CD4-positive, alpha-beta T cell (primary cell): ENCODE measurements at regions of chr4 and their contacts with region 1.

Region 1: DNA sequence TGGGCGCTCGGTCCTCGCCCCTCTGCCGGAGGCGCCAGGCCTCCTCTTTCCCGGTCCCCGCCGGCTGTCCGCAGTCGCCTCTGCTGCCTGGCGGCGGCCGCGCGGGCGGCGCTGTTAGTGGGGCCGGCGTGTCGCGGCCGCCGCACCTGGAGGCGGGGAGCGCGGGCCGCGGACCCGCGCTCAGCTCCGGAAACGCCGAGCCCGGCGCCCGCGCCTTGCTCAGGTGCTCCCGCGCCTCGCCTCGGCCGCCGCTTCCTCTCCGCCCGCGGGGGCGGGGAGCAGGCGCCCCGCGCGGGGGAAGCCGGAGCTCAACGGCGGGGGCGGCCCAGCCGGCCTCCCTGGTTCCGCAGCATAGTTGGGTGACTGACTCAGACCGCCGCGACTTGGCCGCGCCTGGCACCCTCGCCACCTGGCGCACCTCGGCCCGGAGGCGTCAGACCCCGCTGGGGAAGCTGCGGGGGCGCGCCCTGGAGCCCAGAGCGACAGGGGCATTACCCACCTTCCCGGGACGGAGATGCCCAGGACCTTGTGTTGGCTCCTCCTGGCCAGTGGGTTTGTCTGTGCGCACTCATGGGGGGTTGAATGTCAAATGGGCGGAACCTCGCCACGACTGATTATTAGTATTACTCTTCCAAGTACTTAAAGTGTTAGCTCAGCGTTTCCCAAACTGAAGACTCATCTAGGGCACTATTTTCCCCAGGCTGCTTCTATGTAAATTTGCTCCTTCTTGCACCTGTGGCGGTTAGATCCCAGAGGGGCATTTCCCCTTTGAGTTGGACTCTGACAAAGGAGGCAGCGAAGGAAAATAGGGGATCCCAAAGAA is at the start of gene ARAP2:
- DNase-seq: peak; percentile 43 to 92 (median 67)
- ATAC-seq: peak; percentile 70
- H3K4me3 ChIP-seq: peak within 1 kb of the TSS; percentile 90
- H3K4me3 Mint-ChIP-seq: peak within 1 kb of the TSS; percentile 99
- H3K27ac ChIP-seq: peak within 1 kb of the TSS; percentile 76 to 93
- H3K27ac Mint-ChIP-seq: peak within 1 kb of the TSS; percentile 95
- H3K4me1 ChIP-seq: peaks cover 18% of the 10 kb centered on the region
- H3K4me1 Mint-ChIP-seq: peaks cover 50% of the 10 kb centered on the region
- H3K27me3 ChIP-seq: no peaks in the 10 kb centered on the region
- H3K27me3 Mint-ChIP-seq: no peaks in the 10 kb centered on the region
- CTCF ChIP-seq: no peak
- total RNA-seq, gene ARAP2: 54.3 to 63.4 TPM

Region 2: GRCh38 chr4:36043901-36044300 is 200.6 kb before region 1 on chr4:
- CTCF ChIA-PET with region 1: no interaction called
- POLR2A ChIA-PET with region 1: no interaction called
- intact Hi-C with region 1: no loop called
- DNase-seq: no peak
- ATAC-seq: no peak
- H3K4me3 ChIP-seq: no peak overlapping the region
- H3K4me3 Mint-ChIP-seq: no peak overlapping the region
- H3K27ac ChIP-seq: no peak overlapping the region
- H3K27ac Mint-ChIP-seq: no peak overlapping the region
- H3K4me1 ChIP-seq: no peaks in the 10 kb centered on the region
- H3K4me1 Mint-ChIP-seq: no peaks in the 10 kb centered on the region
- H3K27me3 ChIP-seq: no peaks in the 10 kb centered on the region
- H3K27me3 Mint-ChIP-seq: no peaks in the 10 kb centered on the region
- CTCF ChIP-seq: no peak

Region 3: GRCh38 chr4:36208893-36209473 is 35.5 kb before region 1 on chr4:
- CTCF ChIA-PET with region 1: interaction called, 3 read pairs
- POLR2A ChIA-PET with region 1: interaction called, 7 read pairs
- intact Hi-C with region 1: loop called (anchors 5 kb)
- DNase-seq: peak in 8 of 14 experiments; percentile 2 to 75 (median 37)
- ATAC-seq: peak; percentile 81
- H3K4me3 ChIP-seq: no peak overlapping the region
- H3K4me3 Mint-ChIP-seq: peak overlapping the region; percentile 54
- H3K27ac ChIP-seq: no peak overlapping the region
- H3K27ac Mint-ChIP-seq: peak overlapping the region; percentile 78
- H3K4me1 ChIP-seq: peaks cover 8% of the 10 kb centered on the region
- H3K4me1 Mint-ChIP-seq: peaks cover 67% of the 10 kb centered on the region
- H3K27me3 ChIP-seq: no peaks in the 10 kb centered on the region
- H3K27me3 Mint-ChIP-seq: no peaks in the 10 kb centered on the region
- CTCF ChIP-seq: no peak

Region 4: GRCh38 chr4:36255577-36255976 is 11.1 kb after region 1 on chr4:
- CTCF ChIA-PET with region 1: interaction called, 13 read pairs
- POLR2A ChIA-PET with region 1: interaction called, 149 read pairs
- intact Hi-C with region 1: loop called in 1 of 2 experiments (anchors 1 kb)
- DNase-seq: peak; percentile 26 to 94 (median 48)
- ATAC-seq: peak; percentile 97
- H3K4me3 ChIP-seq: no peak overlapping the region
- H3K4me3 Mint-ChIP-seq: peak overlapping the region; percentile 56
- H3K27ac ChIP-seq: peak overlapping the region in 1 of 2 donors; percentile 46
- H3K27ac Mint-ChIP-seq: peak overlapping the region; percentile 50
- H3K4me1 ChIP-seq: peaks cover 15% of the 10 kb centered on the region
- H3K4me1 Mint-ChIP-seq: peaks cover 36% of the 10 kb centered on the region
- H3K27me3 ChIP-seq: no peaks in the 10 kb centered on the region
- H3K27me3 Mint-ChIP-seq: no peaks in the 10 kb centered on the region
- CTCF ChIP-seq: no peak

Region 5: DNA sequence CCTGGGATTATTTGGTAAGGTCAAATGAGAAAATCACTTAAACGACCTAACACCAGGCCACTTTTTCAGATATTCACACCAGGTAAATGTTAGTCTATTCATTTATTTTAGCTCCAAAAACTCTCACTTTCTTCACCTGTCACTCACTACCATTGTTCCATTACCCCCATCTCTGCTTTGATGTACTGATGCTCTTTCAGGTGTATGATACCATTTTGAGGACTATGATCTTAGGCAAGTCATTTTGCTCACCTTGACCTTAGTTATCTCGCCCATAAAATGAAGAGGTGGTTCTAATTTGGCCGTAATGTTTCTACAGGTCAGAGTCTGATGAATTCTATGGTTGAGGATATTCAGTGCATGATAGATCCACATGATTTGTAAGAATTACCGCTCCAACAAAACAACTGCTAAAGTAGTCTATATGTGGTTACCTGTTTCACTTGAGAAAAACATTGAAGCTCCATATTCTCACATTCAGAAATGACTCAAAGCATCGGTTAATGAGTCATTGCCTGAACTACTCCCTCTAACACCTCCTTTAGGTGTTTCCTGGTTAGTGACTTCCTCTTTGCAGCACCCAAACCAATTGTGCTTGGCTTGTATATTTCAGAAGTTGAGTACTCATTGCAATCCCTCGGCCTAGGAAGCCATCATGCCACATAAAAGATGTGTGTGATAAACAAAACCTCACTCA is 41.5 kb after region 1 on chr4:
- CTCF ChIA-PET with region 1: interaction called, 16 read pairs
- POLR2A ChIA-PET with region 1: interaction called, 36 read pairs
- intact Hi-C with region 1: loop called (anchors 2 to 5 kb)
- DNase-seq: peak in 13 of 14 experiments; percentile 9 to 92 (median 41)
- ATAC-seq: peak; percentile 93
- H3K4me3 ChIP-seq: peak overlapping the region; percentile 15
- H3K4me3 Mint-ChIP-seq: peak overlapping the region; percentile 49
- H3K27ac ChIP-seq: peak overlapping the region; percentile 13 to 61
- H3K27ac Mint-ChIP-seq: peak overlapping the region; percentile 83
- H3K4me1 ChIP-seq: no peaks in the 10 kb centered on the region
- H3K4me1 Mint-ChIP-seq: peaks cover 20% of the 10 kb centered on the region
- H3K27me3 ChIP-seq: no peaks in the 10 kb centered on the region
- H3K27me3 Mint-ChIP-seq: no peaks in the 10 kb centered on the region
- CTCF ChIP-seq: no peak

Region 6: DNA sequence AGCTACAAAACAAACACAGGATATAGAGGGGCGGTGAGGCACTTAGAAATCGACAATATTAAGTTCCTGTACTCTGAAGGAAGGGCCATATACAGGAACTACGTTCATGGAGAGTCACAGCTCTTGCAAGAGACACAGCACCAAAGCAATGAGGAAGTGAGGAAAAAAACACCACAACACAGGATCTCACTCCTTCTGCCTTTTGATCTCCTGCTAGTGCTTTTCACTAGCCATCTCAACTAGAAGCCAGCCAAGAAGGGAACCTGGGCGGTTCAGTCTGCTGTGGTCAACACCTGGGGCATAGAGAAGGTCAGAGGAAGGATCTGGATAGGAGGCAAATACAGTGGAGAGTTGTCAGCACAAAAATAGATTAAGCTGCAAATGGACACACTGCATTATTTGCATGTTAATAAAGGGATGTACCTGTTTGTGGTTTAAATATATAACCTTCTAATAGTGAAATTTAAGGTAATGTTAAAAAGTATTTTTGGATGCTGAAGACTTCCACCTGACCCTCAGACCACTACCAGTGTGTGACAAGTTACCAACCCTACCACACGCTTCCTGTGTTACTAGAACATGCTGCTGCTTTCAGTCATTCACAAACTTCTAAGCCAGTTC is 141.6 kb after region 1 on chr4:
- CTCF ChIA-PET with region 1: no interaction called
- POLR2A ChIA-PET with region 1: interaction called, 22 read pairs
- intact Hi-C with region 1: loop called in 1 of 2 experiments (anchors 5 kb)
- DNase-seq: peak in 13 of 14 experiments; percentile 0 to 89 (median 30)
- ATAC-seq: peak; percentile 98
- H3K4me3 ChIP-seq: no peak overlapping the region
- H3K4me3 Mint-ChIP-seq: peak overlapping the region; percentile 36
- H3K27ac ChIP-seq: peak overlapping the region; percentile 39 to 44
- H3K27ac Mint-ChIP-seq: peak overlapping the region; percentile 79
- H3K4me1 ChIP-seq: peaks cover 9% of the 10 kb centered on the region
- H3K4me1 Mint-ChIP-seq: peaks cover 37% of the 10 kb centered on the region
- H3K27me3 ChIP-seq: no peaks in the 10 kb centered on the region
- H3K27me3 Mint-ChIP-seq: no peaks in the 10 kb centered on the region
- CTCF ChIP-seq: no peak

Region 7: GRCh38 chr4:36399762-36400353 is 155.4 kb after region 1 on chr4:
- CTCF ChIA-PET with region 1: interaction called, 15 read pairs
- POLR2A ChIA-PET with region 1: interaction called, 10 read pairs
- intact Hi-C with region 1: loop called in 1 of 2 experiments (anchors 5 kb)
- DNase-seq: peak; percentile 13 to 78 (median 40)
- ATAC-seq: peak; percentile 70
- H3K4me3 ChIP-seq: no peak overlapping the region
- H3K4me3 Mint-ChIP-seq: no peak overlapping the region
- H3K27ac ChIP-seq: no peak overlapping the region
- H3K27ac Mint-ChIP-seq: no peak overlapping the region
- H3K4me1 ChIP-seq: no peaks in the 10 kb centered on the region
- H3K4me1 Mint-ChIP-seq: peaks cover 9% of the 10 kb centered on the region
- H3K27me3 ChIP-seq: no peaks in the 10 kb centered on the region
- H3K27me3 Mint-ChIP-seq: peaks cover 4% of the 10 kb centered on the region
- CTCF ChIP-seq: peak; percentile 96